ENCODE measurements at regions of chr16 and their contacts with region 1.

Region 1: GRCh38 chr16:67892899-67893742 is at the start of gene PSKH1:
- DNase-seq: peak; percentile 79 to 96 (median 91)
- ATAC-seq: peak; percentile 97 to 98 (median 98)
- H3K4me3 ChIP-seq: peak within 1 kb of the TSS; percentile 87 to 95
- H3K4me3 Mint-ChIP-seq: peak within 1 kb of the TSS; percentile 90 to 96 (median 95)
- H3K27ac ChIP-seq: peak within 1 kb of the TSS; percentile 85
- H3K27ac Mint-ChIP-seq: peak within 1 kb of the TSS; percentile 87 to 91
- H3K4me1 ChIP-seq: peaks cover 14 to 27% of the 10 kb centered on the region in 2 experiments
- H3K4me1 Mint-ChIP-seq: peaks cover 40 to 50% (median 45%) of the 10 kb centered on the region in 3 donors
- H3K27me3 ChIP-seq: no peaks in the 10 kb centered on the region
- H3K27me3 Mint-ChIP-seq: no peaks in the 10 kb centered on the region
- total RNA-seq, gene PSKH1: 14.8 to 31.4 (median 28.1) TPM

Region 2: DNA sequence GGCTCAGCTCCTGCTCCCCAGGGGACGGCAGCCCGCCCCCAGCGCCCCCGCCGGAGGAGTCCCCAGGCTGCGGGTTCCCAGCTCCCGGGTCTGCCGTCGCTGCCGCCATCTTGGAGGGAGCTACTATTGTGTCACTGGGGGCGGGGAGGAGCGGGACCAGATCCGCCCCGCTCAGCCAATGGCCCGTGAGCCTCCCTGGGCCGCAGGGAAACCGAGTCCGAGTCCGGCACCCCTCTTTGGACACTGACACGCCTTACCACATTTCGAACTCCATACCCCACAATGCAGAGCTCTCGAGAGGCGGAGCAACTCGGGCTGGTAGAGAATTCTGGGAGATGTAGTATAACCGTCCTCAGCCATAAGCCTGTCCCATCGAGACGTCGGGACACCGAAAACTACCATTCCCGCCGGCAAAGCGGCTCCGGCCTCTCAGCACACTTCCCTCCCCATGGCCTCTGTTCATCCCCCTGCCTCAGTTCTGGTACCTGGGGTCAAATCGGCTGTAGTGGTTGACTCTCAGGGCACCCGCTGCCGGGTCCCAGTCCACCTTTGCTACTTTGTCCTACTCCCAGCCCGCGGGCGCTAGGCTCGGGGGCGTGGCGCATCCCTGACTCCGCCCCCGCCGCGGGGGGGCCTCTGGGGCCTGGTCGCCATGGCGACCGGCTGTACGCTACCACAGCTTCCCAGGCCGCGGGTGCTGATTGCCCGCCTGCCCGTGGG is 86.5 kb before region 1 on chr16 and contains the starts of genes RANBP10 and TSNAXIP1:
- CTCF ChIA-PET with region 1: interaction called in 1 of 2 experiments, 3 read pairs
- POLR2A ChIA-PET with region 1: interaction called in 1 of 2 experiments, 10 read pairs
- DNase-seq: peak; percentile 89 to 98 (median 95)
- ATAC-seq: peak; percentile 92 to 93 (median 92)
- H3K4me3 ChIP-seq: peak within 1 kb of the TSS; percentile 87 to 97
- H3K4me3 Mint-ChIP-seq: peak within 1 kb of the TSS; percentile 76 to 89 (median 87)
- H3K27ac ChIP-seq: peak within 1 kb of the TSS; percentile 70
- H3K27ac Mint-ChIP-seq: peak within 1 kb of the TSS; percentile 79 to 94
- H3K4me1 ChIP-seq: peaks cover 29 to 43% of the 10 kb centered on the region in 2 experiments
- H3K4me1 Mint-ChIP-seq: peaks cover 38 to 47% (median 42%) of the 10 kb centered on the region in 3 donors
- H3K27me3 ChIP-seq: no peaks in the 10 kb centered on the region
- H3K27me3 Mint-ChIP-seq: no peaks in the 10 kb centered on the region
- total RNA-seq, gene RANBP10: 21.9 to 29.3 (median 24.5) TPM
- total RNA-seq, gene TSNAXIP1: 0.30 to 0.45 (median 0.37) TPM

Region 3: DNA sequence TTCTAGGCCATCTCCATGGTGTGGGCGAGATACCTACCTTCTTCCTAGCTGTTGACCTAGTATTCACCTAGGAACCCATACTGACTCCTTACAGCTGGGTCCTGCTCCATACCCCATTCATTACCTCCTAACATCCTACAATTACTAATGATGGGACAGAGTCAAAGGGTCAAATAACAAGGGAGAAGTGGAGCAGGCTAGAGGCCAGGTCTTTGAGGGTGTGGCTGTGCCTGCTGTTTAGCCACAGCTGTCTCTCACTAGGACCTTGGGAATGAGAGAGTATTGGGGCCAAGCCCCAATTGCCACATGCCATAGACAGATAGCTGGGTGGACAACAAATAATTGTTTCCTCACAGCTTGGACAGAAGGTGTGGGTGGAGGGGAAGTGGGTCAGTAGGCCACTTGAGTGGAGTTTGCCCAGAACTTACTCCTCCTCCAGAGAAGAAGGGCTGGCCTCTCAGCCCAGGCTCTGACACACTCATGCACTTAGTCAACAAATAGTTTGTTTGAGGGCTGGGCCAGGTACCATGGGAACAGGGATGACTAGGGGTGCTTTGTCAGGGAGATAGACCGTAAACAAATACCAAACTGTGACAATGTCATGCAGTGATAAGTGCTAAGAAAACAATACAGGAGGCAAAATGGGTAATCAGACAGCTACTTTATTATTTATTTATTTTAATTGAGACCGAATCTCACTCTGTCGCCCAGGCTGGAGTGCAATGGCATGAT is 35.5 kb before region 1 on chr16:
- CTCF ChIA-PET with region 1: no interaction called
- POLR2A ChIA-PET with region 1: interaction called in 1 of 2 experiments, 10 read pairs
- DNase-seq: peak in 18 of 35 experiments; percentile 9 to 50 (median 22)
- ATAC-seq: peak; percentile 48 to 64 (median 54)
- H3K4me3 ChIP-seq: no peak overlapping the region
- H3K4me3 Mint-ChIP-seq: no peak overlapping the region
- H3K27ac ChIP-seq: peak overlapping the region; percentile 55
- H3K27ac Mint-ChIP-seq: peak overlapping the region; percentile 40 to 69
- H3K4me1 ChIP-seq: peaks cover 0 to 25% of the 10 kb centered on the region in 2 experiments
- H3K4me1 Mint-ChIP-seq: peaks cover 32 to 45% (median 38%) of the 10 kb centered on the region in 3 donors
- H3K27me3 ChIP-seq: no peaks in the 10 kb centered on the region
- H3K27me3 Mint-ChIP-seq: no peaks in the 10 kb centered on the region

Region 4: DNA sequence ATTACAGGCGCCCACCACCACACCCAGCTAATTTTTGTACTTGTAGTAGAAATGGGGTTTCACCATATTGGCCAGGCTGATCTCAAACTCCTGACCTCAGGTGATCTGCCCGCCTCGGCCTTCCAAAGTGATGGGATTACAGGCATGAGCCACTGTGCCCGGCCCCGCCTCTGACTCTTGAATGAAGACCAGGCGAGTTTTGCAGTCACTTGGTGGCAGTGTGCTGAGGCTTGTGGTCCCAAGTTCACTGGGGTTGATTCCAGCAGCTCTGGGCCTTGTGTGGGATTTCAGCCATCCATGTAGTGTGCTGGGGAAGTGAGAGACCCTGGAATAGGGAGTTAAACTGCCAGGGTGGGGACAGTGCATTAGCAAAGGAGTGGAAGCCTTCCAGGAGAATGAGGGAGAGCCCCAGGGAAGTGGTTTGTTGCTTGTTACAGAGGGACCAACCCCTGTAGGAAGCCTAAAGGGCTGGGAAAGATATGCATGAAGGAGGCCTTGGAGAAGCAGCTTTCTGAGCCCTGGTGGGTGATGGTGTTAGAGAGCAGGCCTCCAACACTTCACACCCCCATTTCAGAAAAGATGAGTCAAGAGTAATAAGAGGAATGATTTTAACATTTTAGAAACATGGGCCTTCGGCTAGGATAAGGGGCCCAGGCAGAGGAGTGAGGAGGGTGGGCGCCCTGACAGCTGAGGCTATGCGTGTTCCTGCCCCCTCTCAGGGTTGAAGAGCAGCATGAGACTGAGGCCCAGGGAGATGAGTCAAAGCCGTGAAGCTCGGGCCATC is 14.5 kb after region 1 on chr16:
- CTCF ChIA-PET with region 1: no interaction called
- POLR2A ChIA-PET with region 1: interaction called in 1 of 2 experiments, 10 read pairs
- DNase-seq: no peak
- ATAC-seq: no peak
- H3K4me3 ChIP-seq: no peak overlapping the region
- H3K4me3 Mint-ChIP-seq: no peak overlapping the region
- H3K27ac ChIP-seq: no peak overlapping the region
- H3K27ac Mint-ChIP-seq: no peak overlapping the region
- H3K4me1 ChIP-seq: peaks cover 0 to 12% of the 10 kb centered on the region in 2 experiments
- H3K4me1 Mint-ChIP-seq: peaks cover 11 to 21% (median 13%) of the 10 kb centered on the region in 3 donors
- H3K27me3 ChIP-seq: no peaks in the 10 kb centered on the region
- H3K27me3 Mint-ChIP-seq: no peaks in the 10 kb centered on the region

Measured in T-cell (primary cell).